K562 (cell line): ENCODE measurements at regions of chr2 and their contacts with region 1.

Region 1: GRCh38 chr2:38581193-38582147 is 21.3 kb downstream of the HNRNPLL start:
- DNase-seq: peak; percentile 24 to 82 (median 38)
- ATAC-seq: peak; percentile 84
- H3K4me3 ChIP-seq: no peak overlapping the region
- H3K27ac ChIP-seq: no peak overlapping the region
- H3K4me1 ChIP-seq: no peaks in the 10 kb centered on the region
- H3K27me3 ChIP-seq: no peaks in the 10 kb centered on the region
- CTCF ChIP-seq: peak; percentile 52 to 80 (median 66)
- EP300 ChIP-seq: no peak; the same call in 1 of the 2 replicates
- POLR2A ChIP-seq: no peak
- RAD21 ChIP-seq: peak; percentile 79 to 83

Region 2: DNA sequence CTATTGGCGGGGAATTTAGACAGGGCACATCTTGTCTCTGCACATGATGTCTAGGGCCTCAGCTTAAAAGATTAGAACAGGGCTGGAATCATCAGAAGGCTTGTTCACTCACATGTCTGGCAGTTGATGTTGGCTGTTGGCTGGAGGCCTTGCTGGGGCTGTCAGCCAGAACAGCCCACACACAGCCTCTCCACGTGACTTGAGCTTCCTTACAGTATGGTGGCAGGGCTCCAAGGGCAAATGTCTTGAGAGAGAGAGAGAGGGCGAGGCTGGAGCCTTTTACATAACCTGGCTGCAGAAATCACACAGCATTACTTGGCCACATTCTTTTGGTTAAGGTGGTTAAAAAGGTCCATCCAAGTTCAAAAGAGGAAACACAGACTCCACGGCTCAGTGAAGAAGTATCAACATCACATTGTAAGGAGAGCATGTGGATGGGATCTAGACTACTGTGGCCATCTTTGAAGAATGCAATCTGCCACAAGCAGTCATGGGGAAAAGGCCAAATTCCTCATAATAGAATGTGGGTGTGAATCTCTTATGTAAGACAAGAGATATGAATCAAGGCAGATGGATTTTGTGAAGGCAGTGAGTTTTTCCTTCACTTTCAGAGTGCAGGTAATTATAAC is 139.3 kb after region 1 on chr2:
- CTCF ChIA-PET with region 1: interaction called, 17 read pairs
- POLR2A ChIA-PET with region 1: interaction called, 4 read pairs
- in situ Hi-C with region 1: no loop called
- intact Hi-C with region 1: loop called (anchors 2 kb)
- DNase-seq: peak in 1 of 4 experiments; percentile 55
- ATAC-seq: peak; percentile 65
- H3K4me3 ChIP-seq: no peak overlapping the region
- H3K27ac ChIP-seq: no peak overlapping the region
- H3K4me1 ChIP-seq: no peaks in the 10 kb centered on the region; a peak in 2 of 5 replicates
- H3K27me3 ChIP-seq: no peaks in the 10 kb centered on the region
- CTCF ChIP-seq: no peak
- EP300 ChIP-seq: no peak
- POLR2A ChIP-seq: no peak
- RAD21 ChIP-seq: peak in 1 of 2 experiments; percentile 13; a peak in 1 of 4 replicates